Common myeloid progenitor, CD34-positive (primary cell): ENCODE measurements at regions of chr2 and their contacts with region 1.

Region 1: GRCh38 chr2:88691339-88692183 is at the start of gene RPIA:
- DNase-seq: peak; percentile 99 to 100 (median 99)
- H3K4me3 ChIP-seq: peak within 1 kb of the TSS; percentile 73 to 98 (median 86)
- H3K27ac ChIP-seq: peak within 1 kb of the TSS; percentile 62 to 81
- H3K4me1 ChIP-seq: peaks cover 12 to 24% (median 20%) of the 10 kb centered on the region in 4 experiments
- H3K27me3 ChIP-seq: no peaks in the 10 kb centered on the region

Region 2: DNA sequence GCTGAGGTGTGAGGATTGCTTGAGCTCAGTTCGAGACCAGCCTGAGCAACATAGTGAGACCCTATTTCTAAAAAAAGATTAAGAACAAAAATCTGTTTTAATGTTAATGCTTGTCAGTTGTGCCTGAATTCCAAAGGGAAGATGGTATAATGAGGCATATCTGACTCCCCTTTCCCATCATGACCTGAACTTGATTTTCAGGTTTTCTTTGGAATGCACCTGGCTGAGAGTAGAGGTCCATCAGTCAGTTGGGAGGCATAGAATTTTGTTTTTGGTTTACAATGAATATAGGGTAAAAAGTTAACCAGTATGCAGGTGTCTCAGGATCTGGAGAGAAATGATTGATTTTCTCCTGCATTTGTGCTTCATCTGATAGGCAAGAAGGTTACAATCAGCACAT is 20.3 kb after region 1 on chr2:
- CTCF ChIA-PET with region 1: interaction called, 15 read pairs
- POLR2A ChIA-PET with region 1: no interaction called
- DNase-seq: no peak
- H3K4me3 ChIP-seq: no peak overlapping the region
- H3K27ac ChIP-seq: no peak overlapping the region
- H3K4me1 ChIP-seq: no peaks in the 10 kb centered on the region
- H3K27me3 ChIP-seq: no peaks in the 10 kb centered on the region

Region 3: GRCh38 chr2:88739985-88740600 is 48.5 kb after region 1 on chr2:
- CTCF ChIA-PET with region 1: interaction called, 19 read pairs
- POLR2A ChIA-PET with region 1: interaction called, 3 read pairs
- DNase-seq: peak; percentile 71 to 87 (median 80)
- H3K4me3 ChIP-seq: no peak overlapping the region
- H3K27ac ChIP-seq: no peak overlapping the region
- H3K4me1 ChIP-seq: peaks cover 6 to 32% (median 18%) of the 10 kb centered on the region in 4 experiments
- H3K27me3 ChIP-seq: no peaks in the 10 kb centered on the region

Region 4: DNA sequence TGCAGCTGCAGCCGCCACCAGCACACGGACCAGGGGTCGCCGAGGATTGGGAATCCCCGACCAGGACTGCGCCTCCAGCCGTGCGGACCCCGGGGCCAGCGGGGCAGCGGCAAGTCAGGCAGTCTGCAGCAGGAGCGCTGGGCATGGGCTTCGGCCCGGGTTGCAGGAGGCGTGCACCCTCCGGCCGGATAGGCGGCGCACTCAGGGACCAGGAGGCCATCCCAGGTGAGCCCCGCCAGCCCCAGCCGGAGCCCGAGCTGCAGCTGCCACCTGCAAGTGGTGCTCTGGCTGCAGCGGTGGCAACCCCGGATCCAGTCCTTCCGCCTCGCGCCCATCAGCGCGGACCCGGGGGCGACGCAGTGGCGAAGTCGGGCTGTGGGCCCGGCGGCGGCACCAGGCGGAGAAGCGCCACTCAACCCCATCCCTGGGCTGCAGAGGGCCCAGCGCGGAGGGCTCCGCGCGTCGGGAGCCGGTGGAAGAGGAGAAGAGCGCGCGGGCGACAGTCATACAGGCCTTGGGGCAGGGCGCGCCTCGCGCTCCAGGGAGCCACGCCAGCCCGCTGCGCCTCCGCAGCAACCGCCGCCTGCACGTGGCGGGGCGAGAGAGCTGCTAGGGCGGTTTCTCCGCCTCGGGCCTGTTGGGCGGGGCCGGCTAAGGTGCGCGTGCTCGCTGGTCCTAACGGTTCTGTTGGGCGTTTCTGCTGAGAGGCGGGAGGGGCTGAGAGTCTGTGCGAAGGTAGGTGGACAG is 73.8 kb after region 1 on chr2:
- CTCF ChIA-PET with region 1: no interaction called
- POLR2A ChIA-PET with region 1: no interaction called
- DNase-seq: peak; percentile 54 to 87 (median 81)
- H3K4me3 ChIP-seq: peak overlapping the region in 6 of 7 experiments; percentile 20 to 68 (median 50)
- H3K27ac ChIP-seq: no peak overlapping the region
- H3K4me1 ChIP-seq: peaks cover 0 to 16% (median 11%) of the 10 kb centered on the region in 4 experiments
- H3K27me3 ChIP-seq: peaks cover 0 to 22% (median 0%) of the 10 kb centered on the region in 5 experiments